ENCODE measurements at regions of chr16 and their contacts with region 1.

Region 1: GRCh38 chr16:56931892-56932720 is at the start of gene HERPUD1:
- DNase-seq: peak; percentile 97
- H3K4me3 ChIP-seq: peak within 1 kb of the TSS; percentile 98
- H3K27ac ChIP-seq: peak within 1 kb of the TSS; percentile 81
- H3K27me3 ChIP-seq: no peaks in the 10 kb centered on the region
- CTCF ChIP-seq: no peak; the same call in 1 of the 2 replicates
- polyA plus RNA-seq, gene HERPUD1: 207 and 215 TPM in 2 replicates

Region 2: GRCh38 chr16:56910654-56911539 is 21.2 kb before region 1 on chr16:
- CTCF ChIA-PET with region 1: interaction called, 3 read pairs
- POLR2A ChIA-PET with region 1: interaction called, 12 read pairs
- DNase-seq: peak; percentile 49
- H3K4me3 ChIP-seq: no peak overlapping the region
- H3K27ac ChIP-seq: peak overlapping the region; percentile 65
- H3K27me3 ChIP-seq: no peaks in the 10 kb centered on the region
- CTCF ChIP-seq: no peak

Region 3: DNA sequence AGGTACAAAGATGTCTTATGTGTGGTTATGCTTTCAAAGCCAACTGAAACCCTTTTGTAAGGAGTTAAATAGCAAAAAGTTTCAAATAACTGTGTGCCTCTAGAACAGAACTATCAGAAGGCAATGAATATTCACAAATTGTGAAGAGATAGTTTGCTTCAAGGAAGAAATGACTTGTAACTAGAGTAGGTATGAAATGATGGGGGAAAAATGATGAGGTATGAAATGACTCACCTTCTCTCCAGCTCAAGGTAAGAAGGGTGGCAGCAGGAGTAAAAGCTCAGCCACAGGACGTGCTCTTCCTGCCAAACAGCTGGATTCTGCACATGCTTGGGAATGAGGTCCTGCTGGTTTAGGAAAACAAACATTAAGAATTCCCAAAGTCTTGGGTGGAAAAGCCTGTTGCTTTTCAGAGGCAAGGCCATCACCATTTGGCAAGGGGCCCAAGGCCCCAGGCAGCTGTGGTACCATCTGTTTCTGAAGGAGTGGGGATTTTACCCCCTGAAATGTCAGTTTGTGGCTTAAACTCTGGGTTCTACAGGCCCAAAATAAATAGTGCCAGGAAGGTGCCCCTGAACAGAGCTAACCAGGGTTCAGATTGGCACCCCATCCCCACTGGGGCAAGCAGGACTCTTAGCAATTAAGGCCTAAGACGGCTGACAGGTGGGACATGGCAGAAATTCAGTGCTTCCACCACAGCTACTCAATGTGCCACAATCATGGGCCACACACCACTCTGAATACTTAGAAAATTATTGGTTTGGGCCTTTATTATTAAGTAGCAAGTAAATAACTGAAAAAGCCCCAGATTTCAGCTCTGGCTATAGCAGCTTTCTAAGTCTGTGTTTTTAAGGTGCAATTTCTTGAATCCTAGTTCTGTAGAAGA is 13.1 kb after region 1 on chr16:
- CTCF ChIA-PET with region 1: no interaction called
- POLR2A ChIA-PET with region 1: interaction called, 25 read pairs
- DNase-seq: no peak
- H3K4me3 ChIP-seq: no peak overlapping the region
- H3K27ac ChIP-seq: no peak overlapping the region
- H3K27me3 ChIP-seq: no peaks in the 10 kb centered on the region
- CTCF ChIP-seq: no peak